Breast epithelium (tissue), 4 donors: ENCODE measurements at regions of chr1 and their contacts with region 1.

Region 1: GRCh38 chr1:231460614-231461013 is 38.5 kb upstream of the EGLN1 start:
- DNase-seq: no peak
- H3K4me3 ChIP-seq: no peak overlapping the region
- H3K27ac ChIP-seq: no peak overlapping the region
- H3K4me1 ChIP-seq: no peaks in the 10 kb centered on the region
- H3K27me3 ChIP-seq: no peaks in the 10 kb centered on the region
- CTCF ChIP-seq: no peak
- POLR2A ChIP-seq: no peak

Region 2: GRCh38 chr1:232891071-232891470 is 1430.5 kb after region 1 on chr1:
- intact Hi-C with region 1: loop called (anchors 5 kb)
- DNase-seq: no peak
- H3K4me3 ChIP-seq: no peak overlapping the region
- H3K27ac ChIP-seq: no peak overlapping the region
- H3K4me1 ChIP-seq: no peaks in the 10 kb centered on the region
- H3K27me3 ChIP-seq: no peaks in the 10 kb centered on the region
- CTCF ChIP-seq: no peak
- POLR2A ChIP-seq: no peak